Ovary (tissue), 10 donors: ENCODE measurements at regions of chr19 and their contacts with region 1.

Region 1: GRCh38 chr19:18469069-18469846 is 31.3 kb upstream of the ISYNA1 start:
- DNase-seq: peak; percentile 52 to 79 (median 70)
- H3K4me3 ChIP-seq: no peak overlapping the region
- H3K27ac ChIP-seq: no peak overlapping the region
- H3K4me1 ChIP-seq: peaks cover 43% of the 10 kb centered on the region
- H3K27me3 ChIP-seq: no peaks in the 10 kb centered on the region
- CTCF ChIP-seq: peak; percentile 35 to 59 (median 50)
- EP300 ChIP-seq: no peak
- POLR2A ChIP-seq: no peak

Region 2: DNA sequence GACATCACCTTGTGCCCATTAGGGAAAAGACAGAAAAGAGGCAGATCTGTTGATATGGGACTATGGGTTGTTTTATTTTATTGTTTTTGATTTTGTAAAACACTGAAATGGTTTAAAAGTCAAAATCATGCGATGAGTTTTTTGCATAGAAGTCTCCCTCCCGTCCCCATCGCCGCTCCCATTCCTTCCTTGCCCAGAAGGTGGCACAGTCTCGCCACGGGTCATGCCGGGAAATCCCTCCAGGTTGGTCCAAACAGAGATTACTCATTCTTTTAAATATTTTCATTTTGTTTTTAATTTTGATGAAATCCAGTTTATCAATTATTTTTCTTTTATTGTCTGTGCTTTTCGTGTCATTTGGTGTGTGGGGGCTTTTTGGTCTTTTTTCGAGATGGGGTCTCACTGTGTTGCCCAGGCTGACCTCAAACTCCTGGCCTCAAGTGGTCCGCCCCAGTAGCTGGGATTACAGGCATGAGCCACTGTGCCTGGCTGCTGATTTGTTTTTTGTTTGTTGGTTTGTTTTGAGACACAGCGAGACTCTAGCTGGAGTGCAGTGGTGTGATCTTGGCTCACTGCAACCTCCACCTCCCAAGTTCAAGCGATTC is 119.6 kb before region 1 on chr19:
- intact Hi-C with region 1: no loop called
- DNase-seq: peak; percentile 56 to 78 (median 73)
- H3K4me3 ChIP-seq: no peak overlapping the region
- H3K27ac ChIP-seq: no peak overlapping the region
- H3K4me1 ChIP-seq: no peaks in the 10 kb centered on the region
- H3K27me3 ChIP-seq: no peaks in the 10 kb centered on the region
- CTCF ChIP-seq: peak; percentile 48 to 67 (median 64)
- EP300 ChIP-seq: no peak
- POLR2A ChIP-seq: no peak

Region 3: GRCh38 chr19:18521885-18522624 is 52.8 kb after region 1 on chr19 and contains the start of gene ELL:
- intact Hi-C with region 1: loop called in 2 of 4 experiments (anchors 5 to 10 kb)
- DNase-seq: peak; percentile 100
- H3K4me3 ChIP-seq: peak within 1 kb of the TSS; percentile 94
- H3K27ac ChIP-seq: peak within 1 kb of the TSS; percentile 85 to 98
- H3K4me1 ChIP-seq: peaks cover 9% of the 10 kb centered on the region
- H3K27me3 ChIP-seq: no peaks in the 10 kb centered on the region
- CTCF ChIP-seq: peak in 2 of 3 donors; percentile 35 to 38
- EP300 ChIP-seq: no peak
- POLR2A ChIP-seq: peak; percentile 96
- total RNA-seq, gene ELL: 9.8 to 22.3 (median 19.8) TPM

Region 4: GRCh38 chr19:18571564-18572300 is 102.5 kb after region 1 on chr19 and contains the start of gene UBA52:
- intact Hi-C with region 1: loop called in 2 of 4 experiments (anchors 10 kb)
- DNase-seq: peak; percentile 97 to 99 (median 98)
- H3K4me3 ChIP-seq: peak within 1 kb of the TSS; percentile 99
- H3K27ac ChIP-seq: peak within 1 kb of the TSS; percentile 72 to 81
- H3K4me1 ChIP-seq: peaks cover 7% of the 10 kb centered on the region
- H3K27me3 ChIP-seq: no peaks in the 10 kb centered on the region
- CTCF ChIP-seq: no peak
- EP300 ChIP-seq: no peak
- POLR2A ChIP-seq: peak; percentile 96
- total RNA-seq, gene UBA52: 1,269 to 1,882 (median 1,382) TPM